MCF 10A (cell line): ENCODE measurements at regions of chr2 and their contacts with region 1.

Region 1: GRCh38 chr2:174078275-174078674 is 113.1 kb upstream of the SP3 start:
- DNase-seq: peak; percentile 9
- H3K4me3 Mint-ChIP-seq: no peak overlapping the region
- H3K27ac Mint-ChIP-seq: no peak overlapping the region
- H3K4me1 Mint-ChIP-seq: no peaks in the 10 kb centered on the region
- H3K27me3 Mint-ChIP-seq: no peaks in the 10 kb centered on the region
- CTCF ChIP-seq: peak; percentile 24

Region 2: DNA sequence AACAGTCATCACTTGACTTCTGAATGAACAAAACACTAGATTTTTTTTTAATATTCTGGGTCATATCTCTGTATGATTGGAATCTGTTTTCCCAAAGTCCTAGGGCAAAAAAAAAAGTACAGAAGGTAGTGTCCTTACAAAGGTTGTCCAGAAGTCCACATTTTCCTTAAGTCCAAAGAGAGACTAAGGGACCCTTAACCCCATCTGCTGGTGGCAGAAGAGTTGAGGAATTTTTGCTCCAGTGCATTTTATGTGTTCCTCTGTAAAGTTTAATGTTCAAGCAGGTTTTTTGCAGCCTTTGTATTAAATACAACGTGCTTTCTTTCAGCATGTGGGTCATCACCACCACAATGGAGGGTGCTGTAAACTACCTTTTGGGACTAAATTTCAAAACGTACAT is 329.0 kb before region 1 on chr2:
- CTCF ChIA-PET with region 1: interaction called, 3 read pairs
- POLR2A ChIA-PET with region 1: no interaction called
- intact Hi-C with region 1: loop called (anchors 1 kb)
- DNase-seq: peak; percentile 44
- H3K4me3 Mint-ChIP-seq: no peak overlapping the region
- H3K27ac Mint-ChIP-seq: no peak overlapping the region
- H3K4me1 Mint-ChIP-seq: no peaks in the 10 kb centered on the region
- H3K27me3 Mint-ChIP-seq: no peaks in the 10 kb centered on the region
- CTCF ChIP-seq: peak; percentile 45

Region 3: DNA sequence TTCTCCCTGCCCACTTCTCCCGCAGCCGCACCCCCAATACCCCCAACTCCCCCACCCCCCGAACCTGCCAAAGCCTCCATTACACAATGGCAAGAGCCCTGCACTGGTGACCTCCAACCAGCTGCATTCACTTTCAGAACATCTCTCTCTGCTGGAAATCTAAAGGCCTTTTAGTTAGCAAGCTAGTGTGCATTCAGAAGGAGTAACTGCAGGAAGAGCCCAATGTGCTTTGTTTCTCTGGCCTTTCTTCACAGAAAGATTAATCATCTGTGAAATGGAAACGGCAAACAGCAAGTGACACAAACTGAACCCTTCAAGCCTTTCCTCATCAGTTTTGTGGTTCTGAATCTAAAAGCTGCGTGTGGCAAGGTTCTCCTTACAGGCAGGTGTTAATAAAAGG is 45.9 kb after region 1 on chr2:
- CTCF ChIA-PET with region 1: no interaction called
- POLR2A ChIA-PET with region 1: no interaction called
- intact Hi-C with region 1: no loop called
- DNase-seq: no peak
- H3K4me3 Mint-ChIP-seq: no peak overlapping the region
- H3K27ac Mint-ChIP-seq: no peak overlapping the region
- H3K4me1 Mint-ChIP-seq: peaks cover 16% of the 10 kb centered on the region
- H3K27me3 Mint-ChIP-seq: no peaks in the 10 kb centered on the region
- CTCF ChIP-seq: no peak